AG04450 (cell line): ENCODE measurements at regions of chr9 and their contacts with region 1.

Region 1: GRCh38 chr9:27162045-27162444 is 53.0 kb downstream of the TEK start:
- DNase-seq: peak; percentile 34
- H3K4me3 ChIP-seq: no peak overlapping the region
- H3K27ac ChIP-seq: no peak overlapping the region
- H3K27me3 ChIP-seq: no peaks in the 10 kb centered on the region
- CTCF ChIP-seq: no peak

Region 2: DNA sequence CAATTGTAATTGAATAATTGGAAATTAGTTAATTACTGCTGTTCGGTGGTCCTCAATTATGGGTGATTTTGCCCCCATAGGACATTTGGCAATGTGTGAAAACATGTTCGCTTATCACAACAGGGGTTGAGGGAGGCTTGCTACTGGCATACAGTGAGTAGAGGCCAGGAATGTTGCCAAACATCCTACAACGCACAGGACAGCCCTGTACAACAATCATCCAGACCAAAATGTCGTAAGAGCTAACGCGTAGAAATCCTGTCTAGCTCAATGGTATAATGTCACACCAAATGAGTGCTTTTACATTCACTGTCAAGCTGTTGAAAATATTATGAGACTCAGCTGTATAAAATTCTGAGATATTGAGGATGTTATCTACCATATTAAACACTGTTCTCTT is 1019.4 kb before region 1 on chr9:
- CTCF ChIA-PET with region 1: no interaction called
- POLR2A ChIA-PET with region 1: interaction called, 10 read pairs
- DNase-seq: no peak
- H3K4me3 ChIP-seq: no peak overlapping the region
- H3K27ac ChIP-seq: no peak overlapping the region
- H3K27me3 ChIP-seq: no peaks in the 10 kb centered on the region
- CTCF ChIP-seq: no peak